CD4-positive, alpha-beta T cell (primary cell): ENCODE measurements at regions of chr2 and their contacts with region 1.

Region 1: GRCh38 chr2:159516241-159516766 is 100.0 kb downstream of the BAZ2B start:
- DNase-seq: peak in 8 of 14 experiments; percentile 3 to 84 (median 15)
- ATAC-seq: peak; percentile 98
- H3K4me3 ChIP-seq: peak overlapping the region; percentile 63
- H3K4me3 Mint-ChIP-seq: peak overlapping the region; percentile 79
- H3K27ac ChIP-seq: peak overlapping the region; percentile 58 to 75
- H3K27ac Mint-ChIP-seq: peak overlapping the region; percentile 88
- H3K4me1 ChIP-seq: peaks cover 4% of the 10 kb centered on the region
- H3K4me1 Mint-ChIP-seq: peaks cover 30% of the 10 kb centered on the region
- H3K27me3 ChIP-seq: no peaks in the 10 kb centered on the region
- H3K27me3 Mint-ChIP-seq: no peaks in the 10 kb centered on the region
- CTCF ChIP-seq: no peak

Region 2: GRCh38 chr2:159286709-159287441 is 229.4 kb before region 1 on chr2:
- CTCF ChIA-PET with region 1: no interaction called
- POLR2A ChIA-PET with region 1: interaction called, 11 read pairs
- intact Hi-C with region 1: no loop called
- DNase-seq: peak; percentile 93 to 100 (median 97)
- ATAC-seq: peak; percentile 98
- H3K4me3 ChIP-seq: peak overlapping the region; percentile 88
- H3K4me3 Mint-ChIP-seq: peak overlapping the region; percentile 90
- H3K27ac ChIP-seq: peak overlapping the region in 1 of 2 donors; percentile 69
- H3K27ac Mint-ChIP-seq: peak overlapping the region; percentile 77
- H3K4me1 ChIP-seq: peaks cover 24% of the 10 kb centered on the region
- H3K4me1 Mint-ChIP-seq: peaks cover 46% of the 10 kb centered on the region
- H3K27me3 ChIP-seq: no peaks in the 10 kb centered on the region
- H3K27me3 Mint-ChIP-seq: no peaks in the 10 kb centered on the region
- CTCF ChIP-seq: no peak

Region 3: GRCh38 chr2:159362816-159363251 is 153.5 kb before region 1 on chr2:
- CTCF ChIA-PET with region 1: no interaction called
- POLR2A ChIA-PET with region 1: no interaction called
- intact Hi-C with region 1: no loop called
- DNase-seq: peak in 1 of 14 experiments; percentile 49
- ATAC-seq: no peak
- H3K4me3 ChIP-seq: no peak overlapping the region
- H3K4me3 Mint-ChIP-seq: no peak overlapping the region
- H3K27ac ChIP-seq: no peak overlapping the region
- H3K27ac Mint-ChIP-seq: no peak overlapping the region
- H3K4me1 ChIP-seq: no peaks in the 10 kb centered on the region
- H3K4me1 Mint-ChIP-seq: no peaks in the 10 kb centered on the region
- H3K27me3 ChIP-seq: no peaks in the 10 kb centered on the region
- H3K27me3 Mint-ChIP-seq: no peaks in the 10 kb centered on the region
- CTCF ChIP-seq: no peak

Region 4: GRCh38 chr2:159573846-159574606 is 57.7 kb after region 1 on chr2:
- CTCF ChIA-PET with region 1: no interaction called
- POLR2A ChIA-PET with region 1: no interaction called
- intact Hi-C with region 1: no loop called
- DNase-seq: peak in 2 of 14 experiments; percentile 10 to 22
- ATAC-seq: no peak
- H3K4me3 ChIP-seq: no peak overlapping the region
- H3K4me3 Mint-ChIP-seq: no peak overlapping the region
- H3K27ac ChIP-seq: no peak overlapping the region
- H3K27ac Mint-ChIP-seq: no peak overlapping the region
- H3K4me1 ChIP-seq: no peaks in the 10 kb centered on the region
- H3K4me1 Mint-ChIP-seq: no peaks in the 10 kb centered on the region
- H3K27me3 ChIP-seq: no peaks in the 10 kb centered on the region
- H3K27me3 Mint-ChIP-seq: no peaks in the 10 kb centered on the region
- CTCF ChIP-seq: no peak

Region 5: GRCh38 chr2:159706385-159706980 is 190.2 kb after region 1 on chr2:
- CTCF ChIA-PET with region 1: no interaction called
- POLR2A ChIA-PET with region 1: interaction called, 26 read pairs
- intact Hi-C with region 1: loop called (anchors 5 kb)
- DNase-seq: no peak
- ATAC-seq: no peak
- H3K4me3 ChIP-seq: no peak overlapping the region
- H3K4me3 Mint-ChIP-seq: no peak overlapping the region
- H3K27ac ChIP-seq: no peak overlapping the region
- H3K27ac Mint-ChIP-seq: no peak overlapping the region
- H3K4me1 ChIP-seq: no peaks in the 10 kb centered on the region
- H3K4me1 Mint-ChIP-seq: peaks cover 13% of the 10 kb centered on the region
- H3K27me3 ChIP-seq: no peaks in the 10 kb centered on the region
- H3K27me3 Mint-ChIP-seq: no peaks in the 10 kb centered on the region
- CTCF ChIP-seq: no peak

Region 6: DNA sequence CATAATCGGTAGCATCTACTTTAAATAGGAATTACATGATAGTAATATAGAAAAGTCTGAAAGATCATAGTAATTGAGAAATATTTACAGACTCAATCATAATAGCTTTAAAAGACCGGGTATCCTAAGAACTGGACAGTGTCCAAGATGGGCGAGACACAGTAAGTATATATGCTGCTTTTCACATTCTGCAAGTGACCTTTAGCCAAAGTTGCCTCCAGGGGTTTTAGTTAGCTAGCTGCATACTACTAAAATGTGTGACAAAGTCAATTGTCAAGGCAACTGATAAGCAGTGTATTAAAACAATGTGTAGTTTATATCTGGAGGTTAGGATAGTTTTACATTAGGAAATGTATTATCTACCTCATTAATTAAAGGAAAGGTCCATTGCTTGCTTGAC is 257.1 kb after region 1 on chr2:
- CTCF ChIA-PET with region 1: no interaction called
- POLR2A ChIA-PET with region 1: no interaction called
- intact Hi-C with region 1: loop called in 1 of 2 experiments (anchors 10 kb)
- DNase-seq: no peak
- ATAC-seq: no peak
- H3K4me3 ChIP-seq: no peak overlapping the region
- H3K4me3 Mint-ChIP-seq: no peak overlapping the region
- H3K27ac ChIP-seq: no peak overlapping the region
- H3K27ac Mint-ChIP-seq: no peak overlapping the region
- H3K4me1 ChIP-seq: no peaks in the 10 kb centered on the region
- H3K4me1 Mint-ChIP-seq: no peaks in the 10 kb centered on the region
- H3K27me3 ChIP-seq: no peaks in the 10 kb centered on the region
- H3K27me3 Mint-ChIP-seq: no peaks in the 10 kb centered on the region
- CTCF ChIP-seq: no peak